PC-9 (cell line): ENCODE measurements at regions of chr1 and their contacts with region 1.

Region 1: GRCh38 chr1:50929376-50929958 is 30.6 kb downstream of the FAF1 start:
- DNase-seq: no peak
- H3K4me3 ChIP-seq: no peak overlapping the region
- H3K27ac ChIP-seq: peak overlapping the region; percentile 29; the same call in 1 of the 2 replicates
- H3K4me1 ChIP-seq: no peaks in the 10 kb centered on the region
- H3K27me3 ChIP-seq: no peaks in the 10 kb centered on the region
- CTCF ChIP-seq: peak; percentile 77

Region 2: GRCh38 chr1:51175278-51175677 is 245.8 kb after region 1 on chr1:
- CTCF ChIA-PET with region 1: interaction called, 20 read pairs
- POLR2A ChIA-PET with region 1: no interaction called
- intact Hi-C with region 1: no loop called
- DNase-seq: no peak
- H3K4me3 ChIP-seq: no peak overlapping the region
- H3K27ac ChIP-seq: no peak overlapping the region
- H3K4me1 ChIP-seq: peaks cover 5% of the 10 kb centered on the region
- H3K27me3 ChIP-seq: no peaks in the 10 kb centered on the region
- CTCF ChIP-seq: no peak

Region 3: GRCh38 chr1:51285791-51286190 is 356.3 kb after region 1 on chr1:
- CTCF ChIA-PET with region 1: interaction called, 14 read pairs
- POLR2A ChIA-PET with region 1: no interaction called
- intact Hi-C with region 1: no loop called
- DNase-seq: no peak
- H3K4me3 ChIP-seq: no peak overlapping the region
- H3K27ac ChIP-seq: no peak overlapping the region
- H3K4me1 ChIP-seq: no peaks in the 10 kb centered on the region
- H3K27me3 ChIP-seq: no peaks in the 10 kb centered on the region
- CTCF ChIP-seq: no peak